ENCODE measurements at regions of chr4 and their contacts with region 1.

Region 1: GRCh38 chr4:74919783-74920182 is 13.1 kb upstream of the PARM1 start:
- DNase-seq: no peak
- ATAC-seq: no peak

Region 2: DNA sequence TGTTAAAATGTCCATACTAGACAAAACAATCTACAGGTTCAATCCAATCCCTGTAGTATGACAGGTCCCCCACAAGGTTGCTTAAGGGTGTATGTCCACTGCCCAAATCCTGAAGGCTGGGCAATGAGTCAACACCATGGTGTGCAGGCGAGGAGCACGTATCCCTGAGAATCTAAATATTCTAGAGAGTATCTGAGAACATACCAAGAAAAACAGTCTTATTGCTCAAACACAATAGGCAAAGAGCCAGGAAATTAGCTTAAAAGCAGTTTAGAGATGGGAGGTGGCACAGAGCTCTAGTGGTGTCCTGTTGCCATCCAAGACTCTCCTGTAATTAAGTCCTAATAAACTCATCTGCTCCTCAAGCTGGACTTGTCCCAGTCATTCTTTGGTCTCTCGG is 557.4 kb after region 1 on chr4:
- intact Hi-C with region 1: loop called in 1 of 2 experiments (anchors 10 kb)
- DNase-seq: no peak
- ATAC-seq: no peak

Measured in left cardiac atrium (tissue), 4 donors.